PC-9 (cell line): ENCODE measurements at regions of chr5 and their contacts with region 1.

Region 1: DNA sequence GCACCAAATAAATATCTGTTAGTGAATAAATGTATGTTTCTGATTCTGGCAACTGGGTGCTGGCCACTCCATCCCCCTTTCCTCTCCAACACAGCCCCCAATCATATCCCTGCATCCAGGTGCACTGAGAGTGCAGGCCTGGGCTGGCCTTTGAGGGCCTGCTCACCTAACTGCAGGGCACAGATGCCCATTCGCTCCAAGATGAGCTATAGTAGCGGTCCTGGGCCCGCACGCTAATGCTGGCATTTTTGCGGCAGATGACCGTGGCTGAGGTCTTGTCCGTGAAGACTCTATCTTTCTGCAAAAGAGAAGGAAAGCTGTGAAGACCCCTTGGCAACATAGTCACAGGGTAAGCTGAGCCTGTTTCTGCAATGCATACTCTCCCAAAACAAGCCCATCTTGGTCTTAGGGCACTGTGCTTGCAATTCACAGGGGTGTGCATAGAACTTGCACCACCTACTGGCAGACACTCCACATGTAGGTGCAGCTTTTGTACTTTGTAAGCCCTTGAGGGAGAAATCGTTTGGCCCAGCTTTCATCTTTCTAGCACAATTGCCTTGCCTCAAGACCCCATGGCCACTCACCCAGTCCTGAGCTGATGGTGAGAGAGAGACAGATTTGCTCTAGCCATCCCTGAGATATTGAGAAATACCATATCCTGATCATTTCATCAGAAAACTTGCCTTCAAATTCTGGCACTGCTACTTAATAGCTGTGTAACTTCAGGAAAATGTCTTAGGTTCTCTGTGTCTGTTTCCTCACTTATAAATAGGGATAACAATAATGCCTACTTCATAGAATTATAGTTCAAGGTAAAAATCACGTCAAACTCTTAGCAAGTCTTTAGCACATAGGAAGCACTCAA is 13.5 kb downstream of the IL12B start:
- DNase-seq: peak in 1 of 2 experiments; percentile 26
- H3K4me3 ChIP-seq: no peak overlapping the region
- H3K27ac ChIP-seq: no peak overlapping the region
- H3K4me1 ChIP-seq: no peaks in the 10 kb centered on the region
- H3K27me3 ChIP-seq: no peaks in the 10 kb centered on the region
- CTCF ChIP-seq: peak; percentile 67

Region 2: GRCh38 chr5:159049844-159050315 is 266.9 kb before region 1 on chr5:
- CTCF ChIA-PET with region 1: no interaction called
- POLR2A ChIA-PET with region 1: no interaction called
- intact Hi-C with region 1: no loop called
- DNase-seq: no peak
- H3K4me3 ChIP-seq: no peak overlapping the region
- H3K27ac ChIP-seq: no peak overlapping the region
- H3K4me1 ChIP-seq: no peaks in the 10 kb centered on the region
- H3K27me3 ChIP-seq: peaks cover 51% of the 10 kb centered on the region
- CTCF ChIP-seq: no peak

Region 3: GRCh38 chr5:159156426-159157238 is 160.1 kb before region 1 on chr5:
- CTCF ChIA-PET with region 1: interaction called, 13 read pairs
- POLR2A ChIA-PET with region 1: interaction called, 4 read pairs
- intact Hi-C with region 1: loop called (anchors 1 kb)
- DNase-seq: peak; percentile 38 to 42
- H3K4me3 ChIP-seq: no peak overlapping the region
- H3K27ac ChIP-seq: peak overlapping the region; percentile 25; the same call in 1 of the 2 replicates
- H3K4me1 ChIP-seq: no peaks in the 10 kb centered on the region
- H3K27me3 ChIP-seq: no peaks in the 10 kb centered on the region
- CTCF ChIP-seq: peak; percentile 92